Tibial artery (tissue), 4 donors: ENCODE measurements at regions of chr6 and their contacts with region 1.

Region 1: DNA sequence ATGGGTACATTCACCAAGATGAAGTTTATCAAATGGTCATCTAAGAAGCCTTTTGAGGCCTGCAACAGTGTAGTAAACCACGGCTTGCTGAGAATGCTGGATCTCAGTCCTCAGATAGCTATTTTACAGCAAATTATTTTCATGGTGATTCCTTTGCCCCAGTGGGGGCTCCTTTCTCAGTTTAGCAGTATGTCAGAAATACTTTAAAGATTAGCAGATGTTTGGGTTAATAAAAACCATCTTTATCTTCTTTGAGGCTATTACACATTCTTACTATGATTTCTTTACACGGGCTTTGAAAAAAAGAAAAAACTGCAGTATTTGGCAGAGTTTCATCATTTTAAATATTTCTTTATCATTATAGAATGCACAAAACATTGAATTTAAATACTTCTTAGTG is 10.7 kb downstream of the MYLIP start:
- DNase-seq: no peak
- H3K4me3 ChIP-seq: no peak overlapping the region
- H3K27ac ChIP-seq: no peak overlapping the region
- H3K4me1 ChIP-seq: peaks cover 0 to 75% (median 53%) of the 10 kb centered on the region in 4 donors
- H3K27me3 ChIP-seq: no peaks in the 10 kb centered on the region
- CTCF ChIP-seq: no peak

Region 2: DNA sequence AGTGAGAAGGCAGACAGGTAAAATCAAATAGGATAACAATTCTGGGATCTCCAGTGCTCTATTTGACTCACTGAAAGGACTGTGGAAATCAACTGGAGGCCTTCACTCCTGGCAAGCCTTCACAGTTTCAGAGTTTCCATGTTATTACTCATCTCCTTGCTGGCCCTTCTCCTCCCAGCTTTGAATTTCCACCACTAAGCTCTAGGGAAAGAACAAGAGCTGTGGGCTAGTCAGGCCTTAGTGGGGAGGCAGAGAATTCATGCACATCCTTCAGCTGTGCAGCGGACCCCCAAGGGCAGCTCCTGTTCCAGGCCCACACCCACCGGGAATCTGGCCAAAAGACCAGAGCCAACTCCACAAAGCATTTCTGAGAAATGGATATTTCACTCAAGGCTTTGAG is 15.3 kb after region 1 on chr6:
- intact Hi-C with region 1: loop called (anchors 1 kb)
- DNase-seq: peak in 1 of 2 donors; percentile 39
- H3K4me3 ChIP-seq: no peak overlapping the region
- H3K27ac ChIP-seq: no peak overlapping the region
- H3K4me1 ChIP-seq: peaks cover 0 to 7% (median 3%) of the 10 kb centered on the region in 4 donors
- H3K27me3 ChIP-seq: no peaks in the 10 kb centered on the region
- CTCF ChIP-seq: no peak

Region 3: GRCh38 chr6:16783509-16783908 is 644.0 kb after region 1 on chr6:
- intact Hi-C with region 1: no loop called
- DNase-seq: no peak
- H3K4me3 ChIP-seq: no peak overlapping the region
- H3K27ac ChIP-seq: no peak overlapping the region
- H3K4me1 ChIP-seq: peaks cover 0 to 10% (median 9%) of the 10 kb centered on the region in 4 donors
- H3K27me3 ChIP-seq: no peaks in the 10 kb centered on the region
- CTCF ChIP-seq: no peak